ENCODE measurements at regions of chr4 and their contacts with region 1.

Region 1: GRCh38 chr4:183261953-183262775 is 57.9 kb downstream of the CLDN22 start:
- DNase-seq: peak; percentile 76 to 83
- H3K4me3 ChIP-seq: no peak overlapping the region
- H3K4me3 Mint-ChIP-seq: no peak overlapping the region
- H3K27ac Mint-ChIP-seq: peak overlapping the region; percentile 73
- H3K4me1 ChIP-seq: peaks cover 33% of the 10 kb centered on the region
- H3K4me1 Mint-ChIP-seq: peaks cover 15% of the 10 kb centered on the region
- H3K27me3 ChIP-seq: no peaks in the 10 kb centered on the region
- H3K27me3 Mint-ChIP-seq: no peaks in the 10 kb centered on the region
- CTCF ChIP-seq: peak; percentile 74 to 82

Region 2: GRCh38 chr4:182878633-182879495 is 383.3 kb before region 1 on chr4:
- CTCF ChIA-PET with region 1: no interaction called
- POLR2A ChIA-PET with region 1: no interaction called
- intact Hi-C with region 1: loop called (anchors 5 kb)
- DNase-seq: no peak
- H3K4me3 ChIP-seq: no peak overlapping the region
- H3K4me3 Mint-ChIP-seq: no peak overlapping the region
- H3K27ac Mint-ChIP-seq: no peak overlapping the region
- H3K4me1 ChIP-seq: no peaks in the 10 kb centered on the region
- H3K4me1 Mint-ChIP-seq: peaks cover 11% of the 10 kb centered on the region
- H3K27me3 ChIP-seq: no peaks in the 10 kb centered on the region
- H3K27me3 Mint-ChIP-seq: no peaks in the 10 kb centered on the region
- CTCF ChIP-seq: no peak

Region 3: GRCh38 chr4:182938205-182938645 is 323.9 kb before region 1 on chr4:
- CTCF ChIA-PET with region 1: interaction called, 20 read pairs
- POLR2A ChIA-PET with region 1: no interaction called
- intact Hi-C with region 1: loop called (anchors 1 kb)
- DNase-seq: peak; percentile 79 to 85
- H3K4me3 ChIP-seq: no peak overlapping the region
- H3K4me3 Mint-ChIP-seq: no peak overlapping the region
- H3K27ac Mint-ChIP-seq: no peak overlapping the region
- H3K4me1 ChIP-seq: no peaks in the 10 kb centered on the region
- H3K4me1 Mint-ChIP-seq: no peaks in the 10 kb centered on the region
- H3K27me3 ChIP-seq: no peaks in the 10 kb centered on the region
- H3K27me3 Mint-ChIP-seq: peaks cover 3% of the 10 kb centered on the region
- CTCF ChIP-seq: peak; percentile 82 to 87

Region 4: DNA sequence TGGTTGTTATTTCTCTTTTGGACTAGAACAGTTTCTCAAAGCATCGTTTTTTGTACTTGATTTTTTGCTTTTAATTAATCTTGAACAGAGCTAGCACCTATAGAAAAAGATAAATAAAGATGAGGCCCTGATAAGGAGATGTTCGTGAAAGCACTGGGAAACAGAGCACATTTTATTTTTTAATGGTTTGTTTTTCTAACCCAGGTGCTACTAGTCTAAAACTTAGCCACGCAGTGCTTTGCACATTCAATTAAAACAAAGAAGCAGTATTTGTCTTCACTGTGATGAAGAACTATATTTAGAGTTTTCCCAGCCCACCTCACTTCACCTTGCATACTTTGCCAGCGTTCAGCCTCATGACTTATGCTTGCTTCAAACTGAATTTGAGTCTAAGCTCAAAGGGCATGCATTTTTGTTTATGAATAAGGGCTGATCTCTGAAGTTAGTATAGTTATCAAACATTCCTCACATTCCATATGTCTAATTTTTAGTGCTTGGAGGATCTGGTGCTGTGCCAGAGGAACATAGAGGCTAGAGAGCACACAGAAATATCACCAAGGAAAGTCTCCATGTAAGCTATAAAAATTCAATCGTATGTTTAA is 86.4 kb before region 1 on chr4:
- CTCF ChIA-PET with region 1: no interaction called
- POLR2A ChIA-PET with region 1: no interaction called
- intact Hi-C with region 1: no loop called
- DNase-seq: no peak
- H3K4me3 ChIP-seq: no peak overlapping the region
- H3K4me3 Mint-ChIP-seq: peak overlapping the region; percentile 24
- H3K27ac Mint-ChIP-seq: no peak overlapping the region
- H3K4me1 ChIP-seq: peaks cover 66% of the 10 kb centered on the region
- H3K4me1 Mint-ChIP-seq: peaks cover 50% of the 10 kb centered on the region
- H3K27me3 ChIP-seq: no peaks in the 10 kb centered on the region
- H3K27me3 Mint-ChIP-seq: no peaks in the 10 kb centered on the region
- CTCF ChIP-seq: no peak

Region 5: DNA sequence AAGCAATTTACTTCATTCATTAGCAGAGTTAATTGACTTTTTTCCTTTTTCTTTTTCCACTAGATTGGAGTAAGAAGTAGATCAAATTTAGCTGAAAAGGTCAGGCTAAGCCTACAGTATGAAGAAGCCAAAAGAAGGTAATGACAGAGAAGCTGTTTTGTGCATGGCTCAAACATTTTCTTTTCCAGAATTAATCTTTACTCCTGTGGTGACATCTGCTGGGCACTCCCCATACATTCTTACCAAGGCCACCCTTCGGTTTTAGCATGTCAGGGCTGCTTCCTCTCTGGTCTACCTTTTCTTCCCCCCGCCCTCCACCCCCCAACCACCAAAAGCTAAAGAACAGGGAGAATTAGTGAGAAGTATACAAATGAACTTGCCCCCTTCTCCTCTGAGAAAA is 12.3 kb before region 1 on chr4:
- CTCF ChIA-PET with region 1: interaction called, 7 read pairs
- POLR2A ChIA-PET with region 1: no interaction called
- intact Hi-C with region 1: loop called (anchors 1 kb)
- DNase-seq: peak in 1 of 2 experiments; percentile 35
- H3K4me3 ChIP-seq: no peak overlapping the region
- H3K4me3 Mint-ChIP-seq: no peak overlapping the region
- H3K27ac Mint-ChIP-seq: no peak overlapping the region
- H3K4me1 ChIP-seq: peaks cover 25% of the 10 kb centered on the region
- H3K4me1 Mint-ChIP-seq: peaks cover 9% of the 10 kb centered on the region
- H3K27me3 ChIP-seq: no peaks in the 10 kb centered on the region
- H3K27me3 Mint-ChIP-seq: no peaks in the 10 kb centered on the region
- CTCF ChIP-seq: peak in 1 of 2 experiments; percentile 24

Measured in Caco-2 (cell line).